Spleen (tissue), 13 donors: ENCODE measurements at regions of chr9 and their contacts with region 1.

Region 1: DNA sequence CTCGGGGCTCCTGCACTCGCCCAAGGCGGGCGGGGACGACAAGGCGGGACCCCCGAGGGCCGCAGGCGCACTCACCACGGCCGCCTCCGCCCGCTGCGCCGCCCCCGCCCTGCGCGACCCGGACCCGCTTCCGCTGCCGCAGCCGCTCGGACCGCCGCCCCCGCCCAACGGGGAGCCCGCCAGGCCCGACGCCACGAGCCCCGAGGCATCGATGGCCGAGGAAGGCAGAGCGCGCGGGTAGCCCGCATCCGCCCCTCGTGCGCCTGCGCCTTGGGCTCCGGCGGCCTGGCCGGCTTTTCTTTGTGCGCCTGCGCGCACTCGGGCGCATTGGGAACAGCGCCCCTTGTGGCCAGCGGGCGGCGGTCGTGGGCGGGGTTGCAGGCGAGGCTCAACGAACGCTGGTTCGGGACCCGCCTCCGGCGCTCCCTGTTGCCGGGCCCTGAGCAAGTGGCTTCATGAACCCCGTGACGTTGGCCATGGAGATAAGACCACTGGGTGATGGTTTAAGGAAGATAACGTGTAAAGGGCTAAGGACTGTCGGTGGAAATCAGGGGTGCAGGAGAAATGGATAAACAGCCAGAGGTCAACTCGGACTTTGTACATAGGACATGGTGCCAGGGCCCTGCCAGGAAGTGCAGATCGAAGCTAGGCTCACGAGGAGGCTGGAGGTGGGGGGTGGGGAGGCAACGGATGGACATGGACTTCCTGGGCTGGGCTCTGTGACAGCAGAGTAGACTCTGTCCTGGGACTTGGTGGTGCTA is at the starts of genes C8G and FBXW5:
- DNase-seq: peak; percentile 100
- H3K4me3 ChIP-seq: peak within 1 kb of the TSS; percentile 72 to 93 (median 86)
- H3K27ac ChIP-seq: peak within 1 kb of the TSS; percentile 85 to 97 (median 95)
- H3K4me1 ChIP-seq: peaks cover 26 to 94% (median 74%) of the 10 kb centered on the region in 6 donors
- H3K27me3 ChIP-seq: no peaks in the 10 kb centered on the region
- CTCF ChIP-seq: peak; percentile 98 to 100 (median 100)
- POLR2A ChIP-seq: peak in 2 of 3 donors; percentile 6 to 72
- total RNA-seq, gene C8G: 2.3 to 7.4 (median 3.8) TPM in 6 of 7 donors, not detected in the other
- total RNA-seq, gene FBXW5: 97.6 to 170 (median 105) TPM

Region 2: DNA sequence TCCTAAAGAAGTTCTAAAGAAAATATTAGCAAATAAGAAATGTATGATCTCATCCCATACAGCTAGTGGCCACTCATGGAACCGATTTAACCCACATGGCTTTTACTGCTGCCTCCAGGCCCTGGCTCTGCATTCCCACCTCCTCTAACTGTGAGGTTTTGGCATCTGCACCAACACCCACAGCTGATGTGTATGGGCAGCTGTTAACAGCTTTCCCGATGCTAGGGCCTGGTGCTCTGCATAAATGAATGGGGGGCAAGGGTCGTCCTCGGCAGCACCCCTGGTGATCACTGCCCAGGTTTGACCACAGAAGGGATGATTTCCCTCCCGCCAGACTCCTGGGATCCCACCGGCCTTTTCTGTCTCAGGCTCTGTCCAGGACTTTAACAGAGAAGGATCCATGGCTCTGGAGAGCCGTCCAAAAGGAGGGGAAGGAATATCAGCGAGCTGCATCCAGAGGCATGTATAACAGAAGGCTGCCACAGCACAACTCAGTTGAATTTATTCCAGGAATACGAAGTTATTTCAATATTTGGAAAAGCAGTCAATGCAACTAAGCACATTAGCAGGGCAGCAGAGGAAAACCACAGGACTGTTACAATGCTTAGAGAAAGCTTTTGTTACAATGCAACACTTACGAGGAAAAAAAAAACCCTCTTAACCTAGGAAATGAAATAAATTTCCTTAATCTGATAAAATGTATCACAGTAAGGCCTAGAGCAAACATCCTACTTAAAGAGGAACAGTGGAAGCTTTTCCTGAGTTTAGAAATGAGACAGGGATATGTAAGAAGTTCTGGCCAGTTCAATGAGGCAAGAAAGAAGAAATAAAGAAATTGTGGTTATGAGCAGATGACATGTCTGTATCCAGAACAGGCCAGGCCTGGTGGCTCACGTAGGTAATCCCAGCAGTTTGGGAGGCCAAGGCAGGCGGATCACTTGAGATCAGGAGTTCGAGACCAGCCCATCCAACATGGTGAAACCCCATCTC is 912.7 kb before region 1 on chr9:
- intact Hi-C with region 1: no loop called
- DNase-seq: no peak
- H3K4me3 ChIP-seq: no peak overlapping the region
- H3K27ac ChIP-seq: peak overlapping the region in 3 of 8 donors; percentile 15 to 31 (median 27)
- H3K4me1 ChIP-seq: peaks cover 0 to 32% (median 10%) of the 10 kb centered on the region in 6 donors
- H3K27me3 ChIP-seq: no peaks in the 10 kb centered on the region
- CTCF ChIP-seq: no peak
- POLR2A ChIP-seq: no peak

Region 3: DNA sequence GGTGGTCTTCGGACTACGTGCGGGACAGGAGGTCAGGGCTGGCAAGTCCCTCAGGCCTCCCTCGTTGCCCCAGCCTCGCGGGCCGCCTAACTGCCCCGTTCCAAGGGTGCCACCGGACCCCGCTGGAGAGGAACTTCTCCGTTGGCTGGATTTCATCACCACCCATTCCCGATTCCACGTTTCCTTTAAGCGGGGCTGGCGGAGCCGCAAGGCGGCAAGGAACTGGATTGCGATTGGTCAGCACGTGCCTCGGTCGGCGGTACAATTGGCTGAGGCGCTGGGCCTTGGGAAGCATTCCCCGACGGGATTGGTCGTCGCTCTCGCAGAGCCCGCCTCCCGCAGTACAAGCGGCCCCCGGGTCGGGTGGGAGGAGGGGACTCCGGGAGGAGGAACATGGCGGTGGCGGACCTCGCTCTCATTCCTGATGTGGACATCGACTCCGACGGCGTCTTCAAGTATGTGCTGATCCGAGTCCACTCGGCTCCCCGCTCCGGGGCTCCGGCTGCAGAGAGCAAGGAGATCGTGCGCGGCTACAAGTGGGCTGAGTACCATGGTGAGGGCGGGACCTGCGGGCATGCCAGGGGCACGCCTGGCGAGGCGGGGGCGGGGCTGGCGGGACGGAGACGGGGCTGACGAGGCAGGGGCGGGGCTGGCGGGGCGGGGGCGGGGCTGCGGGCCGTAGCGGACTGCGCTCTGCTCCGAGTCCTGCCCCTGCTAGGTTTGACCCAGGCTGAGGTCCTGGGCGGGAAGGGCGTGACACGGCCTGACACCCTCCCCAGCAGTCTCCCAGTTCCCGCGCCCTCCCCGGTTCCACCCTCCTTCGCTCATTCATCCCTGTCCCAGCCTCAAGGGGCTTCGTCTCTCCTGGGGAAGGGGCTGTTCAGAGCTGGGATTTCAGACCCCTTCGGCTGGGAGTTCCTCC is 95.4 kb before region 1 on chr9 and contains the start of gene PHPT1:
- intact Hi-C with region 1: loop called (anchors 10 kb)
- DNase-seq: peak; percentile 99
- H3K4me3 ChIP-seq: peak within 1 kb of the TSS; percentile 57 to 90 (median 82)
- H3K27ac ChIP-seq: peak within 1 kb of the TSS; percentile 80 to 93 (median 88)
- H3K4me1 ChIP-seq: peaks cover 23 to 83% (median 59%) of the 10 kb centered on the region in 6 donors
- H3K27me3 ChIP-seq: peaks cover 0 to 42% (median 37%) of the 10 kb centered on the region in 7 donors
- CTCF ChIP-seq: peak in 2 of 11 experiments; percentile 18 to 20
- POLR2A ChIP-seq: peak in 1 of 3 donors; percentile 72
- total RNA-seq, gene PHPT1: 32.3 to 71.0 (median 63.3) TPM

Region 4: DNA sequence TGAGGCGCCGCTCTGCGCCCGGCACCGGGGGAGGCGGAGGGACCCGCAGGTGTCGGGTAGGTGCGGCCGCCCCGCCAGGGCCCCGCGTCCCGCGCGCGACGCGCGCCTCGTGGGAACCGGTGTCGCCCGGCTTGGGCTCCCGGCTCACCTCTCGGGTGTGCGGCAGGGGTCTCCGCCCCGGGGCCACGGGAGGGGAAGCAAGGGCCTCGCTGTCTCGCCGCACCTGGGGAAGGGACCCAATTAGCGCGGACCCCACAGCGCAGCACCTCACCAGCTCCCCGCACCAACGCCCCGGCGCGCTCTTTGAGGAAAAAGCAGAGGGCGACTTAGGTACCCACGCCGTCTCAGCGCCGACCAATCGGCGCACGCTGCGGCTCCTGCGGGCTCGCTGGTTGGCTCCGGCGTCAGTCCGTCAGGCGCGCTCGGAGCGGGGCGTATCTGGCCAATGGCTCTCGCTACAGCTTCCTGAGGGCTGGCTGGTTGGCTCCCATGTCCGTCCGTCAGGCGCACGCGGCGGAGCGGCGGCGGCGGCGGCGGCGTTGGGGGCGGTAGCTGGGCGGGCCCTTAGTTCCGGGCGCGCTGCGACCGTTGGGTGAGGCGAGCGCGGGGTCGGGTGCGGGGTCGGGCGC is 58.6 kb before region 1 on chr9 and contains the start of gene TRAF2:
- intact Hi-C with region 1: loop called (anchors 10 kb)
- DNase-seq: peak; percentile 97
- H3K4me3 ChIP-seq: peak within 1 kb of the TSS; percentile 80 to 99 (median 95)
- H3K27ac ChIP-seq: peak within 1 kb of the TSS; percentile 82 to 97 (median 94)
- H3K4me1 ChIP-seq: peaks cover 33 to 85% (median 61%) of the 10 kb centered on the region in 6 donors
- H3K27me3 ChIP-seq: no peaks in the 10 kb centered on the region
- CTCF ChIP-seq: peak in 2 of 11 experiments; percentile 37 to 41
- POLR2A ChIP-seq: peak in 1 of 3 donors; percentile 70
- total RNA-seq, gene TRAF2: 14.9 to 49.7 (median 29.6) TPM

Region 5: GRCh38 chr9:137034863-137035761 is 90.4 kb after region 1 on chr9:
- intact Hi-C with region 1: loop called (anchors 10 kb)
- DNase-seq: peak; percentile 97
- H3K4me3 ChIP-seq: peak overlapping the region in 7 of 8 donors; percentile 4 to 86 (median 31)
- H3K27ac ChIP-seq: peak overlapping the region; percentile 80 to 94 (median 84)
- H3K4me1 ChIP-seq: peaks cover 37 to 72% (median 57%) of the 10 kb centered on the region in 6 donors
- H3K27me3 ChIP-seq: peaks cover 0 to 14% (median 0%) of the 10 kb centered on the region in 7 donors
- CTCF ChIP-seq: peak; percentile 85 to 97 (median 94)
- POLR2A ChIP-seq: peak in 1 of 3 donors; percentile 20